OCI-LY7 (cell line): ENCODE measurements at regions of chr7 and their contacts with region 1.

Region 1: DNA sequence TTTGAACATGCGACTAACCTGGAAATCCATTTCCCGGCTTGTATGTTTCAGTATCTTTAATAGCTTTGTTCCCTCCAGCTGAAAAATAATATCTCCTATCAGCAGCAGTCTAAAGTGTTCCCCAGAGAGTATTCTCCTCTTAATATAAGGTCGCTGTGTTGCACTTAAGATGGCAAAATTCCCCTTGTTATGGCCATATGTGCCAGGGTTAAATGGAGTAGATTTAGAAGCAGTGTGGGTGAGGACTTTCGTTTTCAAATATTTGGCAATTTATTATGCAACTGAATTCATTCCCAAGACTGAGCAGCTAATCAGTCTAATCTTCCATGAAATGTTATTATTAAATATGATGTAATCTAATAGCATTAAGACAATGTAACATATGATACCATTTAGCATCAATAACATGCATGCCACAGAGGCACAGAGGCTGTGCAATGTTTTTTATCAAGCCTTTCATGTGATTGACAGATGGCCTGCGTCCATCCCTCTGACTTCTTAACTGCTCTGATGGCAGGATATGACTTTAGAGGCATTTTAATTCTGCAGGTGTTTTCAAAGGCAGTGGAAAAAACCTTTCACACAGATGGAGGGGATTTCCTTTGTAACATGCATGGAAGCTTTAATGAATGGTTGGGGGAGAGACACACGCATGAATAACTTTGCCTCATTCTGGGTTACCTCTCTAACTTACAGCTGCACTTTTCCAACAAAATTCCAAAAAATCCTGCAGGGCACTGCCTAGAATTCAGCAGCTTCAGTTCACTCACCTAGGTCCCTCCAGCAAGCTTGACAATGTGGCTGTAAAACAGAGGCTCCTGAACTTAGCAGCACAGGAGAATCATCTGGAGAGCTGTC is 55.1 kb upstream of the ZPBP start:
- DNase-seq: peak; percentile 97
- H3K4me3 ChIP-seq: peak overlapping the region; percentile 52
- H3K27ac ChIP-seq: peak overlapping the region; percentile 99
- H3K4me1 ChIP-seq: peaks cover 99% of the 10 kb centered on the region
- CTCF ChIP-seq: no peak

Region 2: GRCh38 chr7:50092579-50093491 is 55.3 kb before region 1 on chr7 and contains the start of gene ZPBP:
- CTCF ChIA-PET with region 1: no interaction called
- POLR2A ChIA-PET with region 1: no interaction called
- intact Hi-C with region 1: no loop called
- DNase-seq: peak; percentile 69
- H3K4me3 ChIP-seq: no peak within 1 kb of the TSS
- H3K27ac ChIP-seq: no peak within 1 kb of the TSS
- H3K4me1 ChIP-seq: peaks cover 5% of the 10 kb centered on the region
- CTCF ChIP-seq: peak; percentile 99
- total RNA-seq, gene ZPBP: not detected in 2 replicates

Region 3: DNA sequence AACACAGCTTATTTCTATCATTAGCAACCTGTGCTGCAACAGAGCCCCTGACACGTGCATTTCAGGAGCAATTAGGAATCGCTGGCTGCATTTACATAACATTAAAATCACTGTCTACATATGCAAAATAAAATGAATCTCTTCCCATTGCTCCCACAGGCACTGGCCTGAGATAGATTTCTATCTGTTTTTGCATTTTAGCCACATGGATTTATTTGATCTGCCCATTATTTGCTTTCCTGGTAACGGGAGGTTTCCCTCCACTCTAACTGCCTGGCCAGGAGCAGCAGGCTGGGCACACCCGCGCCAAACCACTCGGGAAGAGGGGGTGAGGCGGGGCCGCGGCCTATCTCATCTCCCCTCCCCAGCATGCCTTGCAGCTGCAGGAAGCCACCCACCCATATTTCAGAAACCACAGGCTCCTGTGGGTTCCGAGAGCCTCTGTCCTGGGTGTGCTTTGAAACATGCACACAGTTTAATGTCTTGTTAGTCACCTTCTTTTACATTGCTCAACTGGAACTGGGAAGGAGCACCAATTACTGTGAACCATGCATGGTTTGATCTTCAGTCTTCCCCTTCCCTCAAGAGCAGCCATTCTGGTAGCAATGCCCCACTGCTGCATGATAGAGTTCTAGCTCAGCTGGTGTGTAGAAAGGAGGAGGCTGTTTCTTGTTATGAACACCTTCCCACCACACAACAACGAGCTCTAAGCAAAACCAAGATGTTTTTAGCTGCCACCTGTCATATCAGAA is 118.6 kb after region 1 on chr7:
- CTCF ChIA-PET with region 1: no interaction called
- POLR2A ChIA-PET with region 1: interaction called, 8 read pairs
- intact Hi-C with region 1: loop called (anchors 2 kb)
- DNase-seq: peak; percentile 76
- H3K4me3 ChIP-seq: peak overlapping the region; percentile 29
- H3K27ac ChIP-seq: peak overlapping the region; percentile 85
- H3K4me1 ChIP-seq: peaks cover 100% of the 10 kb centered on the region
- CTCF ChIP-seq: no peak

Region 4: DNA sequence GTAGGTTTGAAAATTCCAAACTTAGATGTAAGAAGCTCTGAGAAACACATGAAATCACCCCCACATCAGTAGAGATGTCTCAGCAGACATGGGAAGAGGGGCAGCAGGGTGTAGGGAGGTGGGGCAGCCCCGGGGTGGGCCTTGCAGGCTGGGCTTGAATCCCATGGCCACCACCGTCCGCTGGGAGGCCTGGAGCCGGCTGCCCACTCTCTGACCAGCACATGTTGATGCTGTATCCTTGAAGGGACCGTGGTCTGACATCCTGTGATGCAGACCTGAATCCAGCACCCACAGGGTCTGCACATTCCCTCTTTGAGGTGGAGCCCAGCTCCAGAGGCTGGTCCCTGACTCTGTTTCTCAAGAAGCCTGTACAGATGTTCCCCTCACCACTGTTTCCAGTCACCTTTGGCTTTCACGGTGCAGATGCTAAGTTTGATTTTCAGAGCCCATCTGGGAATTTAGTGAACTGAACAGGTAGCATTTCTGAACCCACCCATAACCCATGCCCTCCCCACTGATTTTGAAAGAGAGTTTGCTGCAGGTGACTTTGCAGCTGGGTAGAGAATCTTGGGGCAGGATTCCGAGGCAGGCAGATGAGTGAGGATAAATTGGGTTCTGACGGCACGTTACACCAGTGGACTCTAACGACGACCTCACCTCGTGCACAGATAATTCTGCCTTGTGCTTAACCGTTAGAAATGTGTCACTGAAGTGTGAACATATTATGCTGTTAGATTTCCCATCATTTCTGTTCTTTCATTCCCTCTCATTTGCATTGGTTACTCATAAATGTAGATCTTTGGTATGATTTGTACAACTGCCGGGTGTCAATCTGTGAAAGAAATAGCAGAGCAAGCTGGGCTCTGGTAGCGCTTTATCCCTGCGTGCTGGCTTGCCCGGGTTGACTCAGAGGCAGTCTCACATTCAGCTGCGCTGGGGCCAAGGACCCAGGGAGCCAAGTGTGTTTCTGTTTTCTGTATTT is 202.1 kb after region 1 on chr7:
- CTCF ChIA-PET with region 1: no interaction called
- POLR2A ChIA-PET with region 1: interaction called, 4 read pairs
- intact Hi-C with region 1: loop called (anchors 5 kb)
- DNase-seq: no peak
- H3K4me3 ChIP-seq: peak overlapping the region; percentile 12
- H3K27ac ChIP-seq: peak overlapping the region; percentile 42
- H3K4me1 ChIP-seq: peaks cover 57% of the 10 kb centered on the region
- CTCF ChIP-seq: no peak